Dorsolateral prefrontal cortex (tissue), 120 donors: ENCODE measurements at regions of chr7 and their contacts with region 1.

Region 1: DNA sequence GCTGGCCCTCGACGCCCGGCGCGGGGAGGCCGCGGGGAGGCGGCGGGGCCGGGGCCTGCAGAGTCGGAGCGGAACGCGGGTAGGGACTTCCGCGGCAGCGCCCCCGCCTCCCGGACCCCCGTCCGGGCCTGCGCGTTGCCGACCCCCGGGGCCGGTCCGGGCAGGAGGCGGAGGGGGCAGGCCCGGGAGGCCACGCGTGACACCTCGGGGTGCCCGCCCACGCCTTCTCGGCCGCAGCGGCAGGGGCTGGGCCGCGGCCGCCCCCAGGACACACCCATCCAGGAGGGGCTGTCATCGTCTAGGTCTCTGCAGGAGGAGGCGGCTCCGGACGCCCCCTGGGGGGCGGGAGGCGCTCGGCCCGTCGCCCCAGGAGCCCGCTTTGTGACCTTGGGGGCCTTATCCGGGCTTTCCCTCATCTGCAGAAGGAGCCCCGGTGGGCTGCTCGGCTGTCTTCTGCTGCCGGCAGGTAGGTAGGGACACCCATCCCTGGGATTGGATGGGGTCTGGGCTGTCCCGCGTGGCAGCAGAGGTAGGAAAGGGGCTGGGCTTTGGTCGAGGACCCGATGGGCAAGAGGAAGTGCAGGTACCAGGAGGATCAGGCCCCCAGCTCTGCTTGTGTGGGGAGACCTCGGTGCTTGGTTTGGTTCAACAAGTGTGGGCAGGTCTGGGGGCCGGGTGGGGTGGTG is 569 bp downstream of the ZNF316 start:
- DNase-seq: peak in 1 of 10 donors; percentile 47
- H3K4me3 ChIP-seq: peak overlapping the region; percentile 63 to 99 (median 84)
- H3K27ac ChIP-seq: peak overlapping the region in 35 of 59 donors; percentile 7 to 86 (median 51)
- H3K27me3 ChIP-seq: no peaks in the 10 kb centered on the region
- CTCF ChIP-seq: peak in 1 of 56 donors; percentile 11

Region 2: DNA sequence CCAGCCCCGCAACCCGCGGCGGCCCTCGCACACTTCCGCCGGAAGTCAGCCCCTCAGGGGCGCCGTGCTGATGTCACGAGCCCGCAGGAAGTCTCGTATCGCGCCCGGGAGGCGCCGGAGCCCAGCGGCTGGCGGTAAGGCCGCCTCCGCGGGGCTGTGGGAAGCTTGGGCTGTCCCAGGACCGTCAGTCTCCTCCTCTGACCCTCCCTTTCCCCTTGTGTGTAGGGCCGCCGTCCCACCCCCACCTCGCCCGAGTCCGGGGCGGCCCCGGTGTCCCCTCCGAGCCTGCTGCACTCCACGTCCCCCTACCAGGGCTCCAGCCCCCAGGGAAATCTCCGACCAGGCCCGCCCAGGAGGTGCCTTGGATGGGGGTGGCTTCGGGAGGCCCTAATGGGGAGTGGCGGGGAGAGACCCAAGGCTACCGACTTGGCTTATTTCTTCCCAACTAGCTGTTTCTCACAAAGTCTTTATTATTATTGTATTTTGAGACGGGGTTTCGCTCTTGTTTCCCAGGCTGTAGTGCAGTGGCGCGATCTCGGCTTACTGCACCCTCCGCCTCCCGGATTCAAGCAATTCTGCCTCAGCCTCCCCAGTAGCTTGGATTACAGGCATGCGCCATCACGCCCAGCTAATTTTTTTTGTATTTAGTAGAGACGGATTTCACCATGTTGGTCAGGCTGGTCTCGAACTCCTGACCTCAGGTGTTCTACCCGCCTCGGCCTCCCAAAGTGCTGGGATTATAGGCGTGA is 60.1 kb before region 1 on chr7 and contains the start of gene ZDHHC4:
- intact Hi-C with region 1: loop called in 1 of 2 experiments (anchors 5 kb)
- DNase-seq: peak; percentile 74 to 93 (median 88)
- H3K4me3 ChIP-seq: peak within 1 kb of the TSS; percentile 68 to 95 (median 85)
- H3K27ac ChIP-seq: peak within 1 kb of the TSS; percentile 7 to 98 (median 93)
- H3K27me3 ChIP-seq: no peaks in the 10 kb centered on the region
- CTCF ChIP-seq: peak in 38 of 56 donors; percentile 1 to 59 (median 35)
- total RNA-seq, gene ZDHHC4: 30.5 to 60.4 (median 41.9) TPM

Region 3: GRCh38 chr7:6589829-6590644 is 47.6 kb before region 1 on chr7 and contains the start of gene INTS15:
- intact Hi-C with region 1: loop called in 1 of 2 experiments (anchors 1 kb)
- DNase-seq: peak; percentile 43 to 84 (median 62)
- H3K4me3 ChIP-seq: peak within 1 kb of the TSS; percentile 66 to 98 (median 91)
- H3K27ac ChIP-seq: peak within 1 kb of the TSS in 57 of 59 donors; percentile 18 to 93 (median 82)
- H3K27me3 ChIP-seq: no peaks in the 10 kb centered on the region
- CTCF ChIP-seq: peak in 55 of 56 donors; percentile 34 to 96 (median 74)
- total RNA-seq, gene INTS15: 24.0 to 46.8 (median 35.2) TPM

Region 4: DNA sequence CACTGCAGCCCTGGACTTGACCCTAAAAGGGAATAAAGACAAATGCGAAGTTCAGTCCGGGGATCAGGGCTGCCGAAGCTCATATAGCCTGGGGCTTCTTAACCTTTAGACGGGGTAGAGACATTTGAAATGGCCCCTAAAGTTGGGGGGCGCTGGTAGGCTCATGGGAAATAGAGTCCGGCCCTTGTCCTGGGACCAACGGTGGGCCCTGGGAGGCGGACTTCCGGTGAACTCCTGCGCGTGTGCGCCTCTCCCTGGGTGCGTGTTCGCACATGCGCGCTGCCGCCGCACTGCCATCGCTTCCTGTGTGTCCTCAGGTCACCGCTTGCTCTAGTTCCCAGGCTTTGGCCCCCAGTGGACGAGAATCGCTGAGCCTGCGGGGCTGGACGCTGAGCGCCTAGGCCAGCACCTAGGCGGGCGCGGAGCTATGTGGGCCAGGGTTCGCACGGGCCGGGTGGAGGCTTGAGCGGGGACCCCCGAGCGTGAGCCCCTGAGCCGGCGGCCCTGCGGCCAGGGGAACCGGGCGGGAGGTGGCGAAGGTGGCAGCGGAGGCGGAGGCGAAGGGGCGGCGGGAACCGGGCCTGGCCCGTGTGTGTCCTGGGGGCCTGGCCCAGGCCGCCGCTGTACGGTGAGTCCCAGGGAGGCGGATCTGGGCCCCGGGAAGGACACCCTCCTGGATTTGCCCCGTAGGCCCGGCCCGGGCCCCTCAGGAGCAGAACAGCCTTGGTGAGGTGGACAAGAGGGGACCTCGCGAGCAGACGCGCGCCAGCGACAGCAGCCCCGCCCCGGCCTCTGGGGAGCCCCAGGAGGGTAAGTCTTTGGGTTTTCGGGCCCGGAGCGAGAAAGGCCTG is 92.0 kb after region 1 on chr7:
- intact Hi-C with region 1: loop called in 1 of 2 experiments (anchors 5 kb)
- DNase-seq: peak; percentile 83 to 95 (median 92)
- H3K4me3 ChIP-seq: peak overlapping the region; percentile 66 to 99 (median 94)
- H3K27ac ChIP-seq: peak overlapping the region in 54 of 59 donors; percentile 1 to 94 (median 72)
- H3K27me3 ChIP-seq: no peaks in the 10 kb centered on the region
- CTCF ChIP-seq: peak in 53 of 56 donors; percentile 12 to 65 (median 43)

Region 5: DNA sequence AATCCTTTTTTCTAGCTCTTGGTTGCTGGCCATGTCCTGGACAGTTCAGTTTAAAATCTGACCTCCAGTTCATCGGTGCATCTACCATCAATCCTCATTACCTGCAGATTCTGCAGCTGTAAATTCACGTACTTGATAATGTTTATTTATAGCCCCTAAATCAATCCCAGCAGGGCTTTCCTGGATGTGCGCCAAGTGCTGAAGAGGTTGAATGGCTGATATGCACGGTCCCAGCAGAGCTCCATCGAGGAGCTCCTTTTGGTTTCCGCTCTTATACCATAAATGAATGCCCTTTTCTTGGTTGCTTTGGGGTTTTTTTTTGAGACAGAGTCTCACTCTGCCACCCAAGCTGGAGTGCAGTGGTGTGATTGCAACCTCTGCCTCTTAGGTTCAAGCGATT is 279.6 kb after region 1 on chr7:
- intact Hi-C with region 1: no loop called
- DNase-seq: no peak
- H3K4me3 ChIP-seq: no peak overlapping the region
- H3K27ac ChIP-seq: no peak overlapping the region
- H3K27me3 ChIP-seq: no peaks in the 10 kb centered on the region
- CTCF ChIP-seq: no peak